H1 (cell line): ENCODE measurements at regions of chr17 and their contacts with region 1.

Region 1: DNA sequence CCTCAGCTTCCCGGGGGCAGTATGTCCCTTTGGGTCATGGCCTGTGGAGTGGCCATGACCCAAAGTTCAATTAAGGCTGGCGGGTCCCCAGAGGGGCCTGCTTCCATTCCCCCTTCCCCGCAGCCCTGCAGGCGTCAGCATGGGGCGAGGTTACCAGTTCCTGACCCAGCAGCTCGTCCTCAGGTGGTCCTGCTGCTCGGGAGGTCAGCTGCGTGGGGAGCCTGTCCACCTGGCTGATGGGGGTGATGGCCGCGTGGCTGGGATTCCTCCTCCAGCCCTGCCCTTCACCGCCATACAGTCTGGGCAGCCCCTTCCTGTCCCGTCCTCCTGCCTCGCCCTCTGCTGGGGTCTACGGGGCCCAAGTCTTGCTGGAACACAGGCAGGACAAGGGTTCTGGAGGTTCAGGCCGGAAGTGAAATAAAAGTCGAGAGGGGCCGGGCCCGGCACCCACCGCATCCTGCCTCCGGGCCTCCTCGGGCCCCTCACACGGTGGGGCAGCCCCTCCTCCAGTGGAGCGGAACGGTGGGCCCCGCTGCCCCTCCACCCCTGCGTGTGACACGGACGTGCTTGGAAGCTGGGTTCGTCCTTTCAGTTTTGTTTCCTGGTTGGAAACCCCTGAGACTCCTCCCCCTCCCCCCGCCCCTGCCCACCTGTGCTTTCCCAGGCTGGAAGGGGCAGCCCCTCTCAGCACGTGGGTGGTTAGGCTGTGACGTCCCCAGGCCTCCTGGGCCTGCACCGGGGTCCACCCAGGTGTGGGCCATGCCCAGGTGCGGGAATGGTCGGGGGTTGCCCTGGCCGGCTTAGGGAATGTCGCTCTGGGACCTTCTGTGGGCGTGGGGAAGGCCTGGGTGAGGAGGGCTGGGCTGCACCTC is 6.8 kb downstream of the UBALD2 start:
- DNase-seq: peak in 1 of 2 experiments; percentile 67
- H3K4me3 ChIP-seq: no peak overlapping the region
- H3K27ac ChIP-seq: peak overlapping the region; percentile 43
- H3K4me1 ChIP-seq: peaks cover 5 to 23% (median 17%) of the 10 kb centered on the region in 4 experiments
- H3K27me3 ChIP-seq: no peaks in the 10 kb centered on the region
- CTCF ChIP-seq: peak in 2 of 3 experiments; percentile 4 to 23; a peak in 1 of 4 replicates
- EP300 ChIP-seq: no peak
- POLR2A ChIP-seq: no peak; a peak in 1 of 3 replicates
- RAD21 ChIP-seq: no peak; a peak in 2 of 4 replicates

Region 2: DNA sequence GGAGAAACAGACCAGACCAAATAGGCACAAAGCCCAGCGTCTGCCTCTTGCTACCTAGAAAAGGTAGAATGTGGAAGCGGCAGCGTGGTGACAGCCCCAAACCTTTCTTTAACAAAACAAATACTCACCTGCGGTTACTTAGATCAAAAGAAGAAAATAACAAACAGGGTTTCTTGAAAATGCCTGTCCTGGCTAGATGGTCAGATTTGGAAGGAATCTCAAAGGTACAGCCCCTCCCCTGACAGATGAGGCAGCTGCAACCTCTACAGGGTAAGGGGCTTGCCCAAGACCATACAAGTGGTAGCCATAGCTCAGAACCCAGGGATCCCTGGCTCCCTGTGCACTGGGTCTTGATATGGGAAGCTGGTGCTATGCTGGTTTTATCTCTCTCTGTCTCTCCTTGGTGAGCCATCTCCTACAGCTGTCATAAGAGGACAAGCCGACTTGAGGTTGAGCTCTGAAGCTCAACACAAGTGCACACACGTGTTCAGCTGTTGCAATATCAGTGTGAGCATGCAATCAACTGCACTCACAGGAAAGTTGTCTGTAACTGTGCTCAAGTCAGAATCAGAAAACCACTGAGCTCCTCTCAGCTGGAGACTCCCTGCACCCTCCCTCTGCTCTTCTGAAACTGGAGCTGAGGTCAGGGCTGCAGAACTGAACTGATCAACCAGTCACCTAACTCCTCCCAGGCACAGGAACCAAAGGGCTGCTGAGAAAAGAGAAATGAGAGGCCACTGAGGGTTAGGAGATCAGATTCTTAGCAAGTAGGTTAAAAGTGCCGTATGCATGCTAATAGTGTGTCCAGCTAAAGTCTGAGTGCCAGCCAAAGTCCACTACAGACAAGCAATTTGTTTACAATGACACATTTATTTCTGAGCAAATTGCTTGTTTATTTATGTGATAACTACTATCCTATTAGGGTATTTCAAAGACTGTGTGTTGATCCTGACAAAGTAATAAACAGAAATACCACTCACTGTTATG is 25.5 kb before region 1 on chr17:
- CTCF ChIA-PET with region 1: interaction called, 16 read pairs
- POLR2A ChIA-PET with region 1: interaction called, 7 read pairs
- DNase-seq: no peak
- H3K4me3 ChIP-seq: no peak overlapping the region
- H3K27ac ChIP-seq: no peak overlapping the region
- H3K4me1 ChIP-seq: peaks cover 0 to 4% (median 1%) of the 10 kb centered on the region in 4 experiments; a peak in 3 of 7 replicates
- H3K27me3 ChIP-seq: peaks cover 0 to 13% (median 12%) of the 10 kb centered on the region in 4 experiments; a peak in 6 of 7 replicates
- CTCF ChIP-seq: no peak
- EP300 ChIP-seq: no peak
- POLR2A ChIP-seq: no peak
- RAD21 ChIP-seq: no peak

Region 3: DNA sequence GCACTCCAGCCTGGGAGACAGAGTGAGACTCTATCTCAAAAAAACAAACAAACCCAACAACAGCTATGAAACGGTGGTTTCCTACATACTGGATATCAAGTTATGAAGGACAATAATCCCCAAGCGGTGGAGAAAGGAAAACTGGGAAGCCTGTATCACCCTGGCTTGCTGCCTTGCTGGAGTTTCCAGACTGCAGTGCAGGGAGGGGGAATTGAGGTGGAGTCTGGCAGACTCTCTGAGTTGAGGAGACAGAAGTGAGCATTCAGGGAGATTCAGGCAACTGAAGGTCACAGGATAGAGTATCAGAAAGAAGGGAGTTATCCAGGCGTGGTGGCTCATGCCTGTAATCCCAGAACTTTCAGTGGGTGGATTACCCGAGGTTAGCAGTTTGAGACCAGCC is 24.3 kb after region 1 on chr17:
- CTCF ChIA-PET with region 1: interaction called, 14 read pairs
- POLR2A ChIA-PET with region 1: no interaction called
- DNase-seq: no peak
- H3K4me3 ChIP-seq: no peak overlapping the region
- H3K27ac ChIP-seq: no peak overlapping the region
- H3K4me1 ChIP-seq: no peaks in the 10 kb centered on the region
- H3K27me3 ChIP-seq: no peaks in the 10 kb centered on the region
- CTCF ChIP-seq: no peak
- EP300 ChIP-seq: no peak
- POLR2A ChIP-seq: no peak
- RAD21 ChIP-seq: no peak

Region 4: DNA sequence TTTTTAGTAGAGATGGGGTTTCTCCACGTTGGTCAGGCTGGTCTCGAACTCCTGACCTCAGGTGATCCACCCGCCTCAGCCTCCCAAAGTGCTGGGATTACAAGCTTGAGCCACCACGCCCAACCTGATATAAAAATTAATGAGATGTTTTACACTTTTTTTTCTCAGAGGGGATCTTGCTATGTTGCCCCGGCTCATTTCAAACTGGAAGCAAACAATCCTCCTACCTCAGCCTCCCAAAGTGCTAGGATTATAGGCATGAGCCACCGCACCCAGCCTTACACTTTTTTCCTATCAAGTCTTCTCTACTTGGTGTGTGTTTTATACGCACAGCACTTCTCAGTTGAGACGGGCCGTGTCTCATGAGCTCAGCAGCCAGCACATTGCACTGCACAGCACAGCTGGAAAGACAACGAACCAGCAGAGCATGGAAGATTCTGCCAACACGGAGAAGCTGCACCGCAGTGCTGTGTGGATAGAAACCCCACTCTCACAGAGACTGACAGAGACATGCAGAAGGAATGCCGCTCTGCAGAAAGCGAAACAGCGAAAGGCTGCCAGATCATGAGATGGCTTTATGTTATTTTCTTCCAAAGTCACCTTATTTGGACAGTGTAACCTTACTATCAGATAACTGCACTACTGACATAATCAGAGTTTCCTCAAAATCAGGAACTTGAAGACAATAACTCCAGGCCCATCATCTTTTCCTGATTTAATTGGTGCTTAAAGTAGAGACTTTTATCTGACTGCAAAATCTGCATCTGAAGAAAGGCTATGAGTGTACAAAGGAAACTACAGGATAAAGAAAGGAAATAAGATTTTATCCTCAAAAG is 42.7 kb after region 1 on chr17:
- CTCF ChIA-PET with region 1: no interaction called
- POLR2A ChIA-PET with region 1: no interaction called
- DNase-seq: no peak
- H3K4me3 ChIP-seq: no peak overlapping the region
- H3K27ac ChIP-seq: no peak overlapping the region
- H3K4me1 ChIP-seq: no peaks in the 10 kb centered on the region
- H3K27me3 ChIP-seq: no peaks in the 10 kb centered on the region
- CTCF ChIP-seq: no peak
- EP300 ChIP-seq: no peak
- POLR2A ChIP-seq: no peak
- RAD21 ChIP-seq: no peak